GM10248 (cell line): ENCODE measurements at regions of chr17 and their contacts with region 1.

Region 1: GRCh38 chr17:80575057-80575875 is 30.6 kb downstream of the RPTOR start:
- DNase-seq: peak; percentile 91
- CTCF ChIP-seq: peak; percentile 100

Region 2: DNA sequence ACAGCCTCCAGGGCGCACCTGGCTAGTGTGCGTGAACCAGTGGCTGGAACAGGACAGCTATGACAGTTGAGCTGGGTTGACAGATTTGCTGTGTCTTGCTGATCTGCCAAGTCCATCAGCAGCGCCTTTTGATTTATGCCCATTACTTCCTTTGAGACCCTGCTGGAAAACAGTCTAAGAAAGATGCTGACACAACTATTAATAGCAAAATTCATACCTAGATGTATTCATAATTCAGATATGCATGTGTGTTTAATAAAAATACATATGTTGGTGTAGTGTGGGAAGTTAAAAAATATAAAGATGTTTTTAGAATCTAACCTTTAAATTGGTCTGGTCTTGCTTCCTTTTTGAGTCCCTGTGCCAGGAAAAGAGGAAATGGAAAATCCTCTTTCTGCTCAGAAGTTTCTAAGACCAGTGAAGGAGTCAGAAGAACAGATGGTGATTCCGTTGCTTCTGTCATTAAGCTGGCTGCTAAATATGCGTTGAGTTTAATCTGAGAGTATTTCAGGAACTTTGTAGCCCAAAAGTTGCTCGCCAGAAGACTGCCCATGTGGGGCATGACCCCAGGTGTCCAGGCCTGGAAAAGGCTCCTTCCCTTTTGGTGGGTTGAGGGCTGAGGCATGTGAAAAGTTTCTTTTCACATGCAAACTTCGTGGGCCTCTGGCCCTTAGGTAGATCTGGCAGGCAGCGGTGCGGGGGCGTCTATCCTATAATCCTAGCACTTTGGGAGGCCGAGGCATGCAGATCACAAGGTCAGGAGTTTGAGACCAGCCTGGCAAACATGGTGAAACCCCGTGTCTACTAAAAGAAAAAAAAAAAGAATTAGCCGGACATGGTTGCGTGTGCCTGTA is 200.3 kb before region 1 on chr17:
- CTCF ChIA-PET with region 1: no interaction called
- POLR2A ChIA-PET with region 1: no interaction called
- DNase-seq: no peak
- CTCF ChIP-seq: no peak

Region 3: DNA sequence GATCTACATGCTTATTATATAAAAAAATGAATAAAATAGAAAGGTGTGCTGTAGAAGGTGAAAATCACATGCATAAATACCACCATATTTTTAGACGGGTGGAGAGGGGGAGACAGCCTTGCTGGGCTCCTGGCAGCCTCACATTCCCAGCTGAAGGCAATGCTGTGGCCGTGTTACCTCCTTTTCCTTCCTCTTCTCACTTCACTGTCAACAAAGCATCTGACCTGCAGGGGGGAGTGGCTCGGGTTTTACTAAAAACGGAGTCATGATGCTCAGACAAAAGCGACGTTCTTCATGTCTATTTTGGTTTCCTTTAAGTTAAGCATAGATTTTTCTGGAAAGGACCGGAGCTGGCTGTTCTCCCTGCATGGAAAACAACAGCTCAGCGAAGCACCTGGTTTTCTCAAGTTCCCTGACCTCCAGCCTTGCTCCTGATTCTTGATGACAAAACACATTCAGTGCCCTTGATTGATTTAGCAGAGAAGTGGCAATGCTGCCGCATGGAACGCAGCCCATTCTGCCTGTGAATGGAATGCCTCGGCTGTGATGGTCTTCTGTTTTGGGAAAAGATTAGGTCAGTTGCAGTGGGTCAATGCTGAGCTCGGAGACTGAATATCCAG is 36.1 kb before region 1 on chr17:
- CTCF ChIA-PET with region 1: no interaction called
- POLR2A ChIA-PET with region 1: no interaction called
- DNase-seq: no peak
- CTCF ChIP-seq: no peak

Region 4: DNA sequence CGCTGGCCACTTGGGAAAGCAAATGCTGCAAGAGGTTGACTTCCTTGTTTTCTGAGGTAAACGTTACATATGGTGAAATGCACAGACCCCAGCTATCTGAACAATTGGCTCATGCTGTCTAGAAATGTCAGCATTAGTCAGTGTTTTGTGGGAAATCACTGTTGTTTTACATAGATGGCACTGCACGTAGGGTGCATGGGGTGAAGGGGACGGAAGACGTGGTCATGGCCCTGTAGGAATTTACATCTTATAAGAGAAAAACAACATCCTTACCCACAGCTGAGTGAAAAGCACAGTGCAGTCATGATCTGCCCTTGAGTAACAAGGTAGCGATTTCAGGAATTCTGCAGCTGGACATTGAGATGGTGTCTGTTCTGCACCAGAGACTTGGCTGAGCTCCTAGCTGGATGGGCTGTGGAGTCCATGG is 15.4 kb before region 1 on chr17:
- CTCF ChIA-PET with region 1: interaction called, 21 read pairs
- POLR2A ChIA-PET with region 1: no interaction called
- DNase-seq: no peak
- CTCF ChIP-seq: no peak

Region 5: GRCh38 chr17:80586846-80587228 is 11.6 kb after region 1 on chr17:
- CTCF ChIA-PET with region 1: interaction called, 20 read pairs
- POLR2A ChIA-PET with region 1: no interaction called
- DNase-seq: no peak
- CTCF ChIP-seq: no peak

Region 6: DNA sequence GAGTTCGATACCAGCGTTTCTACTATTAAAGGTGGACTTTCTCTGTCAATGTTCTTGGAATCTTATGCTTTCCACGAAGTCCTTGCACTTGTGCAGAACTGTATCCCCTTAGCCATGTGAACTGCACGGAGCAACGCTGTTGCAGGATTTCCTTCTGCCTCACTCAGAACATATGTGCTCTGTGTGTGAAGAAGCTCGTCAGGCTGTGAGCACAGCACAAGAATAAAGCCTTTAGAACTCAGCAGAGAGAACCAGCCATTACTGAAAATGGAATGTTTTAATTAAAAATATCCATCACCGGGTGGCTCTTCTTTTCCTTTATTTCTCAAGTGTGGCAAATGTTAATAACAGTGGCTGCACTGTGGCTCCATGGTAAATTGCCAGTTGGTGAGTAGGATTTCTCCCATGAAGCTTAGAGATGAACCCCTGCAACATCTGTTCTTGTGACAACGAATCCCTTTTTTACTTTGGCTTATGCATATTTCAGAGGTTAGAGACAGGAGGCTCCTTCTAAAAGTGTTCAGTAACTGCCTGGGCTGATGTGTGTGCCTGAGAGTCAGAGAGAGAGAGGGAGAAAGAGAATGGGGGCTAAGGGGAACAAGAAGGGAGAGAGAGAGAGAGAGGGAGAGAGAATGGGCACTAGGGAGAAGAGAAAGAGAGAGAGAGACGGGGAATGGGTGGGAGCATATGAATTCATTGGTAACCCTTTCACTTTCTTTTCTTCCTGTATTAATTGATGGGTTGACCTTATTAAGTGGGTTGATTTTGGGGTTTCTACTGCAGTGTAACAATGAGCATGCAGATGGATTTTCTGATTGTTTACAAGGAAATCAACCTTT is 19.4 kb after region 1 on chr17:
- CTCF ChIA-PET with region 1: interaction called, 20 read pairs
- POLR2A ChIA-PET with region 1: no interaction called
- DNase-seq: no peak
- CTCF ChIP-seq: no peak